ENCODE measurements at regions of chr10 and their contacts with region 1.

Region 1: GRCh38 chr10:63083904-63084689 is 49.0 kb upstream of the NRBF2 start:
- DNase-seq: peak; percentile 37
- H3K4me3 Mint-ChIP-seq: no peak overlapping the region
- H3K27ac Mint-ChIP-seq: no peak overlapping the region
- H3K4me1 Mint-ChIP-seq: no peaks in the 10 kb centered on the region
- H3K27me3 Mint-ChIP-seq: peaks cover 22% of the 10 kb centered on the region

Region 2: GRCh38 chr10:62437696-62438095 is 646.4 kb before region 1 on chr10:
- CTCF ChIA-PET with region 1: interaction called, 12 read pairs
- POLR2A ChIA-PET with region 1: no interaction called
- DNase-seq: no peak
- H3K4me3 Mint-ChIP-seq: no peak overlapping the region
- H3K27ac Mint-ChIP-seq: no peak overlapping the region
- H3K4me1 Mint-ChIP-seq: peaks cover 18% of the 10 kb centered on the region
- H3K27me3 Mint-ChIP-seq: peaks cover 10% of the 10 kb centered on the region

Region 3: DNA sequence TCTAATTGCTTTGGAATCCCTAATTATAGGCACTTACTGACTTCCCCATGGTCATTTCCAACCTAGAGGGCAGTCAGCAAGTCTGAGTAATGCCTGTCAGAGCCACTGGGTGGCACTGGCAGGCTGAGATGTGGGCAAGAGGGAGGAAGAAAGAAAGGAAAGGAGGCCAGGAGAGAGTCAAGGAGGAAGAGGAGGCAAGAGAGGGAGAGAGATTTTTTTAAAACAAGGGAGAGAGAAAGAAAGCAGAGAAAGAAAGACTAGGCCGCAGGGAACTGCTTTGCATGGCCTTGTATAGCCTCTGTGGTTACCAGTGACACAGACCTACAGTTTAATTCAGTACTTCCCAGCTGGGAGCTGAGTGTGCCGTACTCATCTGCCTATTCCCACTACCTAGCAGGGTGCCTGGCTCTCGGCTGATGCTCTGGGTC is 490.0 kb before region 1 on chr10:
- CTCF ChIA-PET with region 1: interaction called, 11 read pairs
- POLR2A ChIA-PET with region 1: no interaction called
- DNase-seq: peak; percentile 57
- H3K4me3 Mint-ChIP-seq: no peak overlapping the region
- H3K27ac Mint-ChIP-seq: no peak overlapping the region
- H3K4me1 Mint-ChIP-seq: no peaks in the 10 kb centered on the region
- H3K27me3 Mint-ChIP-seq: peaks cover 12% of the 10 kb centered on the region

Region 4: GRCh38 chr10:62610649-62611229 is 473.4 kb before region 1 on chr10:
- CTCF ChIA-PET with region 1: interaction called, 14 read pairs
- POLR2A ChIA-PET with region 1: no interaction called
- DNase-seq: peak; percentile 73
- H3K4me3 Mint-ChIP-seq: no peak overlapping the region
- H3K27ac Mint-ChIP-seq: no peak overlapping the region
- H3K4me1 Mint-ChIP-seq: peaks cover 21% of the 10 kb centered on the region
- H3K27me3 Mint-ChIP-seq: peaks cover 16% of the 10 kb centered on the region

Region 5: DNA sequence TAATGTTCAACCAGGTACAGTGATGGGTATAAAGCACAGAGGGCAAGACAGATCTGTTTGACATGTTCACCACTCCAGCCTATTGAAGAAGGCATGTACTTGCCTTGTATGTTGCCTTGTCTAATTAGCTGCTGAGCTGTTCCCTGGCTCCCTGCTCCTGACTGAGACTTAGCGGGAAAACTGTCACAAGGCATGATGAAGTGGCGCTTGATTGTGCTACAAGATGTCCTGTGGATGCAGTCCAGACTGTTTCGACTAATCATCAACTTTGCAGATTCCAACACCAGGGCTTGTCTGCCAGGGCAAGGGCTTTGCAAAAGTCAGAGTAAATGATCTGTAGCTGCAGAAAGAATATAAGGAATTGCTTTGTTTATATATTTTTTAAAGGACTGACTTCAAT is 87.2 kb before region 1 on chr10:
- CTCF ChIA-PET with region 1: no interaction called
- POLR2A ChIA-PET with region 1: no interaction called
- DNase-seq: no peak
- H3K4me3 Mint-ChIP-seq: no peak overlapping the region
- H3K27ac Mint-ChIP-seq: no peak overlapping the region
- H3K4me1 Mint-ChIP-seq: peaks cover 23% of the 10 kb centered on the region
- H3K27me3 Mint-ChIP-seq: no peaks in the 10 kb centered on the region